Activated T-helper 2 cell treated with anti-CD3 and anti-CD28 coated beads, Interferon-gamma antibody, Interleukin-2, Interleukin-4, amounts not matched to agents 10 μg/mL and 5 μg/mL and 100 μg/mL, durations not matched to agents 14 hours and 24 hours and 36 hours (primary cell): ENCODE measurements at regions of chrX and their contacts with region 1.

Region 1: GRCh38 chrX:39162322-39162735 is 361.1 kb downstream of the MID1IP1 start:
- DNase-seq: peak; percentile 24
- H3K4me3 Mint-ChIP-seq: peak overlapping the region; percentile 56
- H3K27ac Mint-ChIP-seq: peak overlapping the region; percentile 98
- H3K4me1 Mint-ChIP-seq: peaks cover 65% of the 10 kb centered on the region
- H3K27me3 Mint-ChIP-seq: no peaks in the 10 kb centered on the region

Region 2: GRCh38 chrX:39174772-39175417 is 12.6 kb after region 1 on chrX:
- intact Hi-C with region 1: loop called (anchors 1 kb)
- DNase-seq: no peak
- H3K4me3 Mint-ChIP-seq: peak overlapping the region; percentile 44
- H3K27ac Mint-ChIP-seq: peak overlapping the region; percentile 90
- H3K4me1 Mint-ChIP-seq: peaks cover 46% of the 10 kb centered on the region
- H3K27me3 Mint-ChIP-seq: no peaks in the 10 kb centered on the region

Region 3: GRCh38 chrX:39201305-39201990 is 39.1 kb after region 1 on chrX:
- intact Hi-C with region 1: loop called (anchors 1 kb)
- DNase-seq: peak; percentile 32
- H3K4me3 Mint-ChIP-seq: peak overlapping the region; percentile 69
- H3K27ac Mint-ChIP-seq: peak overlapping the region; percentile 97
- H3K4me1 Mint-ChIP-seq: peaks cover 89% of the 10 kb centered on the region
- H3K27me3 Mint-ChIP-seq: no peaks in the 10 kb centered on the region

Region 4: GRCh38 chrX:39309018-39309635 is 146.8 kb after region 1 on chrX:
- intact Hi-C with region 1: loop called (anchors 1 kb)
- DNase-seq: no peak
- H3K4me3 Mint-ChIP-seq: no peak overlapping the region
- H3K27ac Mint-ChIP-seq: peak overlapping the region; percentile 96
- H3K4me1 Mint-ChIP-seq: peaks cover 65% of the 10 kb centered on the region
- H3K27me3 Mint-ChIP-seq: no peaks in the 10 kb centered on the region

Region 5: DNA sequence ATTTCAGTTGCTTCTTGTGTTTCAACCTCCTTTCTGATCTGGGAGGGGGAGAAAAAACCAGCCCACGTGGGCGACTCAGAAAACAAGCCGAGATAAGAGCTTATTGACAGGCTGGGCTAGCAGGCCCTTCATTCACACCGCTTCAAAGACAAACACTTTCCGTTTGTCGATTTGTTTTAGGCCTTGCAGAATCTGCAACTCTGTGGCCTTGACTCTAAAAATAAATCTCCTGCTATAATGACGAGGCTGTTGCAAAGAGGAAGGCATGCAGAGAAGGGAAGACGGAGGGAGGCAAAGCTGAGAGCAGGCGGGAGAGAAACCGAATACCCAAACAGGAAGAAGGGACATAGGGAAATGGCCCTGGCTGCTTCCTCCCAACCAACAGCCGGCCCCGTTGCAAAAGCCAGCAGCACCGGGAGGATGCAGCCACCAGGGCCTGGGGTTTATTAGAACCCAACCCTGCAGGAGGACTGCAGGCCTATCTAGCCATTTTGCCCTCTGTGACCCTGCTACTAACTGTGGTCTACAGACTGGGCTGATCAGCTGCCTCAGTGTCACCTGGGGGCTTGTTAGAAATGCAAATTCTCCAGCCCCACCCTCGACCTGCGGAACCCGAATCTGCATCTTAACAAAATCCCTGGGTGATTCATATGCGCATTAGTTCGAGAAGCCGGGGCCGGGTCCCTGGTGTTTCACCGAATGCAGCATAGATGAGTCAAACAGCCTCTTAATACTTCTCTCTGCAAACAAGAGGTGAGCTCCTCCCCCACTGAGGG is 609.9 kb after region 1 on chrX:
- intact Hi-C with region 1: loop called (anchors 10 kb)
- DNase-seq: peak; percentile 37
- H3K4me3 Mint-ChIP-seq: peak overlapping the region; percentile 69
- H3K27ac Mint-ChIP-seq: peak overlapping the region; percentile 99
- H3K4me1 Mint-ChIP-seq: peaks cover 45% of the 10 kb centered on the region
- H3K27me3 Mint-ChIP-seq: no peaks in the 10 kb centered on the region